ENCODE measurements at regions of chr19 and their contacts with region 1.

Region 1: GRCh38 chr19:17336872-17337722 is at the start of gene GTPBP3:
- DNase-seq: peak; percentile 84 to 99 (median 95)
- ATAC-seq: peak; percentile 96
- H3K4me3 ChIP-seq: peak within 1 kb of the TSS; percentile 76
- H3K4me3 Mint-ChIP-seq: peak within 1 kb of the TSS; percentile 86 to 96 (median 92)
- H3K27ac ChIP-seq: peak within 1 kb of the TSS; percentile 79
- H3K27ac Mint-ChIP-seq: peak within 1 kb of the TSS; percentile 78 to 95 (median 93)
- H3K4me1 ChIP-seq: peaks cover 16 to 22% of the 10 kb centered on the region in 2 donors
- H3K4me1 Mint-ChIP-seq: peaks cover 22 to 55% (median 27%) of the 10 kb centered on the region in 7 donors
- H3K27me3 ChIP-seq: no peaks in the 10 kb centered on the region
- H3K27me3 Mint-ChIP-seq: no peaks in the 10 kb centered on the region
- total RNA-seq, gene GTPBP3: 29.6 to 59.8 (median 40.4) TPM

Region 2: DNA sequence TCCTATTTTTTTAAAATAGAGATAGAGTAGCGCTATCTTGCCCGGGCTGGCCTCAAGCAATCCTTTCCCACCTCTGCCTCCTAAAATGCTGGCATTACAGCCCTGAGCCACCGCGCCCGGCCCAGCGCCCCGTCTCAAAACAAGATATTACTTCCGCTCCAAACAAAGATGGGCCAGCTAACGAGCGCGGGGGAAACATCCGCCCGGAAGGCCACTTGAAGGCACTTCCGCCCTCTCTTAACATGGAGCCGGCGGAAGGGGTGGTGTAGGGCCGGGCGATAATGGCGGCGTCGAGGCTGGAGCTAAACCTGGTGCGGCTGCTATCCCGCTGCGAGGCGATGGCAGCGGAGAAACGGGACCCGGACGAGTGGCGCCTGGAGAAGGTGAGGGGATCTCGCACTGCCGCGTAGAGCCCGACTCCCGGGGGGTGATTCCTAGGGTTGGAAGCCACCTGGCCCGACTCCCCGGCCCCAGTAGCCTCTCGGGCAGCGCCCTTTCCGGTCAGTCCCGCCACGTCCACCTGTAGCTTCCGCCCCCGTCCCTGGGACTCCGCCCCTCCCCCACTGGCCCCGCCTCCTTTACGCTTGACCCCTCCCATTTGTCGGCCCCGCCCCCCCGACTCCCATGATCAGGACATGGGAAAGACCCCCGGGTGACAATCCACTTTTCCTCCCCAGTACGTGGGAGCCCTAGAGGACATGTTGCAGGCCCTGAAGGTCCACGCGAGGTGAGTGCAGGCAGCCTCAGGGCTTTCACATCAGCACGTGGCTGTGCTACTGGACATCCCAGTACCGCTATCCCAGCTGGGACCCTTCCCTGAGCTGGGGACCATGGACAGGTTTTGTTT is 121.7 kb before region 1 on chr19 and contains the start of gene USE1:
- CTCF ChIA-PET with region 1: no interaction called
- POLR2A ChIA-PET with region 1: no interaction called
- intact Hi-C with region 1: loop called in 1 of 2 experiments (anchors 1 kb)
- DNase-seq: peak; percentile 70 to 91 (median 89)
- ATAC-seq: peak; percentile 97
- H3K4me3 ChIP-seq: peak within 1 kb of the TSS; percentile 92
- H3K4me3 Mint-ChIP-seq: peak within 1 kb of the TSS; percentile 83 to 99 (median 90)
- H3K27ac ChIP-seq: peak within 1 kb of the TSS; percentile 89
- H3K27ac Mint-ChIP-seq: peak within 1 kb of the TSS; percentile 97 to 100 (median 99)
- H3K4me1 ChIP-seq: peaks cover 13 to 16% of the 10 kb centered on the region in 2 donors
- H3K4me1 Mint-ChIP-seq: peaks cover 0 to 16% (median 12%) of the 10 kb centered on the region in 7 donors
- H3K27me3 ChIP-seq: no peaks in the 10 kb centered on the region
- H3K27me3 Mint-ChIP-seq: no peaks in the 10 kb centered on the region
- total RNA-seq, gene USE1: 24.7 to 51.1 (median 30.5) TPM

Region 3: GRCh38 chr19:17292286-17293097 is 44.6 kb before region 1 on chr19:
- CTCF ChIA-PET with region 1: interaction called, 6 read pairs
- POLR2A ChIA-PET with region 1: interaction called, 6 read pairs
- intact Hi-C with region 1: loop called (anchors 1 kb)
- DNase-seq: peak; percentile 71 to 88 (median 79)
- ATAC-seq: peak; percentile 97
- H3K4me3 ChIP-seq: peak overlapping the region; percentile 80
- H3K4me3 Mint-ChIP-seq: peak overlapping the region; percentile 83 to 93 (median 92)
- H3K27ac ChIP-seq: peak overlapping the region; percentile 55
- H3K27ac Mint-ChIP-seq: peak overlapping the region; percentile 33 to 87 (median 77)
- H3K4me1 ChIP-seq: peaks cover 0 to 5% of the 10 kb centered on the region in 2 donors
- H3K4me1 Mint-ChIP-seq: peaks cover 0 to 7% (median 5%) of the 10 kb centered on the region in 7 donors
- H3K27me3 ChIP-seq: no peaks in the 10 kb centered on the region
- H3K27me3 Mint-ChIP-seq: peaks cover 0 to 5% (median 0%) of the 10 kb centered on the region in 5 donors

Region 4: DNA sequence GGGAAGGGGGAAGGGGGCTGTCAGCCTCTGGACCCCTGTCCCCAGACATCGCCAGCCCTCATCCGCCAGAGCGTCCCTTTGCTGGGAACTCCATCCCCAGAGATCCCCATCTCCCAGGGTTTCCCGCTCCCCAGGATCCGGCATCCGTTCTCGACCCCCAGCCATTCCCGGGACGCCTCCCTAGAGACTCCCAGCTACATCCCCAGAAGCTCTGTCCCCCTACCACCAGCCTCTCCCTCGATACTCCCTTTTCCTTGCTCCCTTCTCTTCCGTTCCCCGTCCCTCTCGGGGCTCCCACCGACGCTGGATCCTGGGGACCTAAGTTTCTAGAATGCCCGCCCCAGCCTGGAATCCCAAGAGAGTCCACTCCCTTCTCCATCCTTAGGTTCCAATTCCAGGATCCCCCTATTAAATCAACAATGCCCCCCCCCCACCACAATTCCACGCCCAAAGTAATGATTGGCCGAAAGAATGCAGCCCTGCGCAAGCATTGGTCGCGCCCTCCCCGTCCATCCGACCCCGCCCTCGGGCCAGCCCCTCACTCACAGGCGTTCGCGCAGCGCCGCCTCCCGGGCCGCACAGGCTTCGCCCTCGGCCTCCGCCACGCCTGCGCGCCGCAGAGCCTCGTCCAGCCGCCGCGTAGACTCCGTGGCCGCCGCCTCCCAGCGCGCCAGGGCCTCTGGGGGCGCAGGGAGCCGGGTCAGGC is 53.7 kb after region 1 on chr19:
- CTCF ChIA-PET with region 1: interaction called, 6 read pairs
- POLR2A ChIA-PET with region 1: interaction called, 3 read pairs
- intact Hi-C with region 1: loop called in 1 of 2 experiments (anchors 2 kb)
- DNase-seq: peak; percentile 77 to 93 (median 85)
- ATAC-seq: peak; percentile 100
- H3K4me3 ChIP-seq: peak overlapping the region; percentile 84
- H3K4me3 Mint-ChIP-seq: peak overlapping the region; percentile 85 to 98 (median 92)
- H3K27ac ChIP-seq: peak overlapping the region; percentile 2
- H3K27ac Mint-ChIP-seq: peak overlapping the region in 5 of 9 donors; percentile 28 to 92 (median 61)
- H3K4me1 ChIP-seq: peaks cover 15 to 18% of the 10 kb centered on the region in 2 donors
- H3K4me1 Mint-ChIP-seq: peaks cover 6 to 30% (median 20%) of the 10 kb centered on the region in 7 donors
- H3K27me3 ChIP-seq: no peaks in the 10 kb centered on the region
- H3K27me3 Mint-ChIP-seq: peaks cover 0 to 28% (median 0%) of the 10 kb centered on the region in 5 donors

Region 5: DNA sequence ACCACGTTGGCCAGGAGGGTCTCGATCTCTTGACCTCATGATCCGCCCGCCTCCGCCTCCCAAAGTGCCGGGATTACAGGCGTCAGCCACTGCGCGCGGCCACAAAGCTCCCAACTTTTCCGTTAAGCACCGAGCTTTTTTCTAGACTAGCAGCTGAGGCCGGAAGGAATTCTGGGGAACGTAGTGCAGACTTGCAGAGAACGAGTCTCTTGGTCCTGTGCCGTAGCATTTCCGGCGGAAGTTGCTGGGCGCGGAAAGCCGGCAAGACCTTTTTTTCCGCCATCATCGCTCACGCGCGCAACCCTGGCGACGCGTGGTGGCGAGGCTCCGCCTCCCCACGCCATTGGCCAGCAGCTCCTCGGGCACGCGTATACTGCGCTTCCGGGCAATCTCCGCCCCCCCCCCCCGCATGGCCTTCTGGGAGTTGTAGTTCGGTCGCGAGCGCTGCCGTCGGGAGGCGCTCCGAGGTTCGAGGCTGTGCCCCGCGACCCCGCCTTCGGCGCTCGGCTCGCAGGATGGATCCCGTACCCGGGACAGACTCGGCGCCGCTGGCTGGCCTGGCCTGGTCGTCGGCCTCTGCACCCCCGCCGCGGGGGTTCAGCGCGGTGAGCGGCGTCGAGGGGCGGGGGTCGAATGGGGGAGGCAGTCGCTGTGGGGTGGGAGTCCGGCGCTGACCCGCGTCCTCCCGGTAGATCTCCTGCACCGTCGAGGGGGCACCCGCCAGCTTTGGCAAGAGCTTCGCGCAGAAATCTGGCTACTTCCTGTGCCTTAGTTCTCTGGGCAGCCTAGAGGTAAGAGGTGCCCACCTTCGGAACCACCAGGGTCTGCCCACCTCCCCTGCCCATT is 82.7 kb after region 1 on chr19 and contains the start of gene MVB12A:
- CTCF ChIA-PET with region 1: interaction called, 5 read pairs
- POLR2A ChIA-PET with region 1: interaction called, 4 read pairs
- intact Hi-C with region 1: loop called (anchors 1 kb)
- DNase-seq: peak; percentile 85 to 98 (median 96)
- ATAC-seq: peak; percentile 99
- H3K4me3 ChIP-seq: peak within 1 kb of the TSS; percentile 79
- H3K4me3 Mint-ChIP-seq: peak within 1 kb of the TSS; percentile 87 to 95 (median 91)
- H3K27ac ChIP-seq: peak within 1 kb of the TSS; percentile 70
- H3K27ac Mint-ChIP-seq: peak within 1 kb of the TSS; percentile 73 to 93 (median 89)
- H3K4me1 ChIP-seq: peaks cover 12 to 15% of the 10 kb centered on the region in 2 donors
- H3K4me1 Mint-ChIP-seq: peaks cover 4 to 28% (median 19%) of the 10 kb centered on the region in 7 donors
- H3K27me3 ChIP-seq: no peaks in the 10 kb centered on the region
- H3K27me3 Mint-ChIP-seq: no peaks in the 10 kb centered on the region
- total RNA-seq, gene MVB12A: 19.5 to 45.1 (median 33.3) TPM